Mammary epithelial cell (primary cell): ENCODE measurements at regions of chr19 and their contacts with region 1.

Region 1: DNA sequence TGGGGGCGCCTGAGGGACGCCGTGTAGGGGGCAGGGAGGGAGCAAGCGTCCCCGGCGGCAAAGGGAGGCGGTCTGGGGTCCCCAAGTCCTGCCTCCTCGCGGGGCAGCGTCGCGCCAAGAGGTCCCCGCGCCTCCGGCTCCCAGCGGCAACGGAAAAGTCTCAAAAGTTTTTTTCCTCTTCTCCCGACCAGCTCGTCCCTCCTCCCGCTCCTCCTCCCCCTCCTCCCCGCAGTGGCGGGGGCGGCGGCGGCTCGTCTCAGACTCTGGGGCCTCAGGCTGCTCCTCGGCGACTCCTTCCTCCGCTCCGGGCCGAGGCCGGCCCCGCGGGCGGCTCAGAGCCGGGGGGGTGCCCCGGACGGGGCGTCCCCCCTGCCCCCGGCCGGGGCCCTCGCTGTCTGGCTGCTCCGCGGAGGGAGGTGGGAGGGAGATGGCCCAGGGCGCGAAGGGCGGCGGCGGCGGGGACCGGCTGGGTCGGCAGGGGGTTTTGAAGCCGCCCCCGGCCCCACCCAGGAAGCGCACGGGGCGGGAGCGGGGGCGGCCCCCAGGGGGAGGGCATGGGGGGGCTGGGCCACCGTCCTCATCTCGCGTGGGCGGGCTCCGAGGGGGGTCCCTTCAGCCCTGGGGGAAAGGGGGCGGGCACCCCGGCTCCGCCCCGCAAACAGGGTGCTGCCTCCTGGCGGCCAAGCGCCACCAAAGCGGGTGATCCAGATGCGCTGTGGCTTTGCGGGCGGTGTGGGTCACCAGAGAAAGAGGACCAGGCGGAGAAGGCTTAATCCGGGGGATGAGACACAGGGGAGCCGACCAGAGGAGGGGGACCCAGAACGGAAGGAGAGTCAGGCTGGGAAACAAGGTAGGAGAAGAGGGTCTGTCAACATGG is at the start of gene TGFB1:
- DNase-seq: peak; percentile 74
- H3K4me3 ChIP-seq: peak within 1 kb of the TSS; percentile 63 to 98 (median 95)
- H3K27ac ChIP-seq: peak within 1 kb of the TSS; percentile 49
- H3K4me1 ChIP-seq: peaks cover 5% of the 10 kb centered on the region
- H3K27me3 ChIP-seq: no peaks in the 10 kb centered on the region
- CTCF ChIP-seq: peak; percentile 64 to 92
- total RNA-seq, gene TGFB1: 9.8 to 84.1 TPM

Region 2: DNA sequence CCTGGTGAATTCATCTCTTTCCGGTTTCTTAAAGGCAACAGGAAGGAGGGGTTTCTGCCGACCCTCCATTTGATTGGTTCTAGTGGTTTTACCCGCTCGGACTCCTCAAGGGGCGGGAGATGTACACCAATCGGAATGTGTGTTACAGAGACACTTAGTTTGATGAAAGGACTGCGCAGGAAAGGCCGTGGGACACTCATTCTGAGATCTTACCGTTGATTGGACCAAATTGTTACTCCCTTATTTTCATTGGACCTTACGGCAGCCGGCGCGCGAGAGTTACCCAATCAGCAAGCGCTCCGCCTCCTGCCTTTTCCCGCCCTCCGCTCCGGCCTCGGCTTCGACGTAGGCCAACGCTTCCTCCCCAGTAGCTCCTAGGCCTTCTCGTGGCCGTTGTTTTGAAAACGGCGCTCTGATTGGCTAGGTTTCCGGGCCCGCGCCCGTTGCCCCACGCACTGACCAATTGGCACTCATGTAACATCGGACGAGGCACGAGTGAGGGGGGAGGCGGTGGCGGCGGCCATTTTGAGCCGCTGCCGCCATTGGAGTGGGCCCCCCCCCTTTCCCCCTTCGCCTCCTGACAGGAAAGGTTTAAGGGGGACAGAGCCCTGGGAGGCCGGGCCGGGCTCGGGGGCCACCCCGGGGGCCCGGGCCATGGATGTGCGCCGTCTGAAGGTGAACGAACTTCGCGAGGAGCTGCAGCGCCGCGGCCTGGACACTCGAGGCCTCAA is 89.7 kb before region 1 on chr19 and contains the start of gene HNRNPUL1:
- CTCF ChIA-PET with region 1: no interaction called
- dilution Hi-C with region 1: no loop called
- in situ Hi-C with region 1: no loop called
- intact Hi-C with region 1: loop called (anchors 5 kb)
- DNase-seq: peak; percentile 100
- H3K4me3 ChIP-seq: peak within 1 kb of the TSS; percentile 85 to 93 (median 87)
- H3K27ac ChIP-seq: peak within 1 kb of the TSS; percentile 92
- H3K4me1 ChIP-seq: peaks cover 20% of the 10 kb centered on the region
- H3K27me3 ChIP-seq: no peaks in the 10 kb centered on the region
- CTCF ChIP-seq: peak in 1 of 2 donors; percentile 51
- total RNA-seq, gene HNRNPUL1: 80.7 to 175 TPM

Region 3: DNA sequence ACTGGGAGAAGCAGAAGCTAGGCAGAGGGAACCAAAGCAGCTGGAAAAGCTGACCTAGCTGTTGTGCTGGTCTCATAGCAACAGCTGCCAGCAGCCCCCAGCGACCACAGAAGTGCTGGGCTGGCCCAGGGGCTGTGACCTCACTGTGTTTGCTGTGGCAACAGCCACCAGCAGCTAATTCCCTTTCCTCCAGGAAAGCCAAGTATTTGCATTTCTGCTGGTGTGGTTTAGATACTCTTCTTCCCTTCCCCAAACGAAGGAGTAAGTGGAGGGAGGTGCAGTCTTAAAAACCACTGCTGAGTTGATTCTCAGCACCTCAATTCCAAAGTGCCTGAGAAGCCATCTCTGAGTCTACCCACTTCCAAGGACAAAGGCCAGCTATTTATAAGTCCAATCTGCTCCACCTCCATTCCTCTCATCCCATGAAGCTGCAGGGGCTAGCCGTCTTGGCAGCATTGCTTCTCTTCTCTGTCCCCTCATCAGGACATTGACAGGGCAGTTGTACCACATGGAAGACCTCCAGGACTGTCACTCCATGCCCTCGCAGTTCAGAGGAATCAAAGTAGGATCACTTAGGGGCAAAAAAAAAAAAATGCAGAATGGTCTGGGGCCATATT is 55.2 kb before region 1 on chr19:
- CTCF ChIA-PET with region 1: no interaction called
- dilution Hi-C with region 1: loop called (anchors 5 kb)
- in situ Hi-C with region 1: no loop called
- intact Hi-C with region 1: no loop called
- DNase-seq: peak; percentile 17
- H3K4me3 ChIP-seq: no peak overlapping the region
- H3K27ac ChIP-seq: no peak overlapping the region
- H3K4me1 ChIP-seq: peaks cover 10% of the 10 kb centered on the region
- H3K27me3 ChIP-seq: no peaks in the 10 kb centered on the region
- CTCF ChIP-seq: no peak

Region 4: DNA sequence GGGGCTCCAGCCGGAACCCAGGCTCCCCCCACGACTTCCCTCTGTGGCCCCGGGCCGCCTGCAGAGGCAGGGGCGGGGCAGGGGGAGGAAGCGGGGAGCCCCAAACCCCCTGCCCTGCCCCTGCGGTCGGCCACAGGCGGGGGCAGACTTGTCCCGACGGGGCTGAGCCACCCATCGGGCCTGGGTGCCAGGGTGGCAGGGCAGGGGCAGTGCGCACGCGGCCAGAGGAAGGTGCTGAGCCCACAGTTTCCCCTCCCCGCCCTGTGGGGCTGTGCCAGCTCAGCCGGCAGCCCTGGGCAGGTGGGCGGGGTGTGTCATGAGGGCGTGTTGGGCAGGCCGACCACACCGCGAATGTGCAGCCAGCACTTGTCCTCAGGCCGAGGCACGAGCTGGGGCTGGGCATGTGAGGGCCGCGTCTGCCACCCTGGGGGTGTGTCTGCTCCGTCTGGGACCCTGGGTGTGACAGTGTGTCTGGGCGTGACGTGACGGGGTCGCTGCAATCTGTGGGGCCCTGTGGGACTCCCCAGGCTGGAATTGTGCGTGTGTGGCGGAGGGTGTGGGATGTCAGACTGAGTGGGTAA is 26.0 kb before region 1 on chr19:
- CTCF ChIA-PET with region 1: no interaction called
- dilution Hi-C with region 1: no loop called
- in situ Hi-C with region 1: no loop called
- intact Hi-C with region 1: loop called (anchors 1 kb)
- DNase-seq: peak; percentile 88
- H3K4me3 ChIP-seq: peak overlapping the region in 1 of 3 experiments; percentile 27
- H3K27ac ChIP-seq: peak overlapping the region; percentile 29
- H3K4me1 ChIP-seq: peaks cover 51% of the 10 kb centered on the region
- H3K27me3 ChIP-seq: no peaks in the 10 kb centered on the region
- CTCF ChIP-seq: no peak

Region 5: DNA sequence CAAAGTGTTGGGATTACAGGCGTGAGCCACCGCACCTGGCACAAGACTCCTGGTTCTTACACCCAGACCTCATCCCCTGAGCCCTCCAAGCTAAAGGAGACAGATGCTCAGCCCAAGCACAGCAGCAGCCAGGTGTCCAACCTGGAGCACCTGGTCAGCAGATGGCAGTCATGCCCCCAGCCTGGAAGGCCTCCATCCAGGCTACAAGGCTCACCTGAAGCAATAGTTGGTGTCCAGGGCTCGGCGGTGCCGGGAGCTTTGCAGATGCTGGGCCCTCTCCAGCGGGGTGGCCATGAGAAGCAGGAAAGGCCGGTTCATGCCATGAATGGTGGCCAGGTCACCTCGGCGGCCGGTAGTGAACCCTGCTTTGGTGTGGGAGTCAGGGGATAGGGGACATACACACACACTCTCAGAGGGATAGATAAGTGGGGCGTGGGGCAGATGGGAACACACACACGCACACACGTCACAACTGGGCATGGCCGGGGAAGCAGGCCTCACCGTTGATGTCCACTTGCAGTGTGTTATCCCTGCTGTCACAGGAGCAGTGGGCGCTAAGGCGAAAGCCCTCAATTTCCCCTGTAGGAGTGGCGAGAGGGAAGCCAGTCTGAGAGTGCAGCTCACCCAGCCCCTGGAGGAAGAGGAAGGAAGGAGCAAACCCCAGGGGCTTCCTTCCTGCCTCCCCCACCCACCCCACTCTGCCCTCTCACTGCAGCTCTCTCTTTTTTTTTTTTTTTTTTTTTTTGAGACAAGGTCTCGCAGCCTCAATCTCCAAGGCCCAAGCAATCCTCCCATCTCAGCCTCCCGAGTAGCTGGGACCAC is 11.8 kb before region 1 on chr19:
- CTCF ChIA-PET with region 1: no interaction called
- dilution Hi-C with region 1: no loop called
- in situ Hi-C with region 1: no loop called
- intact Hi-C with region 1: no loop called
- DNase-seq: no peak
- H3K4me3 ChIP-seq: no peak overlapping the region
- H3K27ac ChIP-seq: no peak overlapping the region
- H3K4me1 ChIP-seq: no peaks in the 10 kb centered on the region
- H3K27me3 ChIP-seq: no peaks in the 10 kb centered on the region
- CTCF ChIP-seq: peak in 1 of 2 donors; percentile 38

Region 6: DNA sequence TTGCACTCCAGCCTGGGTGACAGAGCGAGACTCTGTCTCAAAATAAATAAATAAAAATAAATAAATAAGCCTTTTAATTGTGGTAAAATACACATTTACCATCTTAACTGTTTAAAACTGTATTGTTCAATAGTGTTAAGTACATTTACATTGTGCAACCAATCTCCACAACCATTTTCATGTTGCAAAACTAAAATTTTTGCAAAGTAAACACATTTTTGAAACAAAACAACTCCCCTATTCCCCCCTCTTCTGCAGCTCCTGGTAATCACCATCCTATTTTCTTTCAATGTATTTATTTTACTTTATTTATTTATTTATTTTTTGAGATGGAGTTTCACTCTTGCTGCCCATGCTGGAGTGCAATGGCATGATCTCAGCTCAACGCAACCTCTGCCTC is 16.1 kb after region 1 on chr19:
- CTCF ChIA-PET with region 1: interaction called, 31 read pairs
- dilution Hi-C with region 1: no loop called
- in situ Hi-C with region 1: no loop called
- intact Hi-C with region 1: no loop called
- DNase-seq: no peak
- H3K4me3 ChIP-seq: no peak overlapping the region
- H3K27ac ChIP-seq: no peak overlapping the region
- H3K4me1 ChIP-seq: peaks cover 21% of the 10 kb centered on the region
- H3K27me3 ChIP-seq: no peaks in the 10 kb centered on the region
- CTCF ChIP-seq: no peak

Region 7: GRCh38 chr19:41420101-41420880 is 66.6 kb after region 1 on chr19:
- CTCF ChIA-PET with region 1: no interaction called
- dilution Hi-C with region 1: loop called (anchors 5 kb)
- in situ Hi-C with region 1: no loop called
- intact Hi-C with region 1: no loop called
- DNase-seq: no peak
- H3K4me3 ChIP-seq: no peak overlapping the region
- H3K27ac ChIP-seq: no peak overlapping the region
- H3K4me1 ChIP-seq: no peaks in the 10 kb centered on the region
- H3K27me3 ChIP-seq: no peaks in the 10 kb centered on the region
- CTCF ChIP-seq: no peak